RWPE1 (cell line): ENCODE measurements at regions of chr13 and their contacts with region 1.

Region 1: DNA sequence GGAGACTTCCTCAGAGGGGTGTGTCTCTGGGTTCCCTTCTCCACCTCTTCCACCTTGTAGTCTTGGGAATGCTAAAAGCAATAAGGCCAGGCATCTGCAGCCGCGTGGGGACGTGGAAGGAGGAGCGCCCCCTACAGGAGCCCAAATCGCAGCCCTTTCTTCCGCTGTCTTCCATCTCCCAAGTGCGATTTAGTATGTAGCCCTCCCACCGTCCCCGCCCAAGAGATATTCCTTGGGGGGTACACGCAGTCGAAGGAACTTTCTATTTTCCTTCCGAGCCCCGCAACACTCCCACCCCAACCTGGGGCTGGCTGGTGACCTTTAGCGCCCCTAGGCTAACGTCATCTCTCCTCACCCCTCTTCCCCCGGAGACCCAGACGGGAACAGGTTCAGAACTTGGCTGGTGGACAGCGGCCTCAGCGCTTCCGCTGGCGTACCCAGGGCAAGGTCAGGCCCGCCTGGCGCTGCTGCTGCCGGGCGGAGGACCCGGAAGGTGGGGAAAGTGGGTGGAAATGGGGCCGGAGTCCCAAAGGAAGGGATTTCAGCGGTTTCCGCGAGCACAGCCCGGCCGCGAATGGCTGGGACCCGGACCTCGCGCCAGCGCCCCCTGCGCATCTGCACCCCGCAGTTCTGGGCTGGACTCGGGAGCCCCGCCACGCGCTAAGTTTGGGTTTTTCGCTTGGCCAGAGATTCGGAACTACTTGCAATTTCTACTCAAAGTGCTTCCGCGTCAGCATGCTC is 2.1 kb upstream of the PCDH8 start:
- DNase-seq: peak; percentile 74
- H3K27ac ChIP-seq: peak overlapping the region; percentile 84
- CTCF ChIP-seq: no peak

Region 2: GRCh38 chr13:52405767-52406494 is 444.6 kb before region 1 on chr13 and contains the start of gene THSD1:
- CTCF ChIA-PET with region 1: interaction called, 10 read pairs
- POLR2A ChIA-PET with region 1: no interaction called
- DNase-seq: peak; percentile 44
- H3K27ac ChIP-seq: peak within 1 kb of the TSS; percentile 90
- CTCF ChIP-seq: no peak

Region 3: DNA sequence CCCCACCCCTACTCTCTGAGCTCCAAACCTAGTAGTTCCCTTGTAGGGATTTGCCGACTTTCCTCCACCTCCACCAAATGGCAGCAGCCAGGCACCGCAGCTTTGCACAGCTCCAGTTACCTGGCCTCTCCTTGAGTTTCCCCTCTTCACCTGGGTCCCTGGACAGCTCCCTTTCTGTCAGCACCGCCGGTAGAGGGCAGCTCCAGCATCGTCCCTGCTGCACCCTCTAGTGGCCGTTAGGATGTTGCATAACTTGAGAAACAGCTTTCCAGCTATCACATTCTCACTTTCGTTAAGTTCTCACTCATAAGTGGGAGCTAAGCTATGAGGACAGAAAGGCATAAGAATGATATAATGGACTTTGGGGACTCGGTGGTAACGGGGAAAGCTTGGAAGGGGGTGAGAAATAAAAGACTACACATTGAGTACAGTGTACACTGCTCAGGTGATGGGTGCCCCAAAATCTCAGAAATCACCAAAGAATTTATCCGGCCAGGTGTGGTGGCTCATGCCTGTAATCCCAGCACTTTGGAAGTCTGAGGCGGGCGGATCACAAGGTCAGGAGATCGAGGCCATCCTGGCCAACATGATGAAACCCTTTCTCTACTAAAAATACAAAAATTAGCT is 117.6 kb after region 1 on chr13:
- CTCF ChIA-PET with region 1: interaction called, 15 read pairs
- POLR2A ChIA-PET with region 1: no interaction called
- DNase-seq: peak; percentile 80
- H3K27ac ChIP-seq: no peak overlapping the region
- CTCF ChIP-seq: peak; percentile 91

Region 4: DNA sequence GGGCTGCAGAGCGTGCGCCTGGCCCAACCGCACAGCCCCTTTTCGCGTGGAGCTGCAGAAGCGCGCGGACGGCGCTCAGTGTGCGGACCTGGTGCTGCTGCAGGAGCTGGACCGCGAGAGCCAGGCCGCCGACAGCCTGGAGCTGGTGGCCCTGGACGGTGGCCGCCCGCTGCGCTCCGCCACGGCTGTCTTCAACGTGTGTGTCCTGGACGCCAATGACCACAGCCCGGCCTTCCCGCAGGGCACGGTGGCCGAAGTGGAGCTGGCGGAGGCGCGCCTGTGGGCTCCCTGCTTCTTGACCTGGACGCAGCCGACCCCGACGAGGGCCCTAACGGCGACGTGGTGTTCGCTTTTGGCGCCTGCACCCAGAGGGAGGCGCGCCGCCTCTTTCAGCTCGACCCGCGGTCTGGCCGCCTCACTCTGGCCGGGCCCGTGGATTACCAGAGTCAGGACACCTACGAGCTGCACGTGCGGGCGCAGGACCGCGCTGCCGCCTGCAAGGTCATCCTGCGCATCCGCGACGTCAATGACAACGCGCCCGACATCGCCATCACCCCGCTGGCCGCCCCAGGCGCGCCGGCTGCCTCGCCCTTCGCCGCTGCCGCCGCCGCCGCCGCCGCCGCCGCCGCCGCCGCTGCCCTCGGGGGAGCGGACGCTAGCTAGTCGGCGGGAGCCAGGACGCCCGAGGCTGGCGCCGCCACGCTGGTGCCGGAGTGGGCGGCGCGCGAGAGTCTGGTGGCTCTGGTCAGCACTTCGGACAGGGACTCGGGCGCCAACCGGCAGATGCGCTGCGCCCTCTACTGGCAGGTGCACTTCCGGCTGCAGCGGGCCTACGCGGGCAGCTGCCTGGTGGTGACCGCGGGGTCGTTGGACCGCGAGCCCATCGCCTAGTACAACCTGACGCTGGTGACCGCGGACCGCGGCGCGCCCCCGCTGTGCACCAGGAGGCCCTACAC is 350.2 kb after region 1 on chr13:
- CTCF ChIA-PET with region 1: interaction called, 10 read pairs
- POLR2A ChIA-PET with region 1: no interaction called
- DNase-seq: peak; percentile 20
- H3K27ac ChIP-seq: no peak overlapping the region
- CTCF ChIP-seq: 0 out of 2 replicates have a peak, but pooled peaks have one; percentile 6